IMR-90 (cell line): ENCODE measurements at regions of chr7 and their contacts with region 1.

Region 1: DNA sequence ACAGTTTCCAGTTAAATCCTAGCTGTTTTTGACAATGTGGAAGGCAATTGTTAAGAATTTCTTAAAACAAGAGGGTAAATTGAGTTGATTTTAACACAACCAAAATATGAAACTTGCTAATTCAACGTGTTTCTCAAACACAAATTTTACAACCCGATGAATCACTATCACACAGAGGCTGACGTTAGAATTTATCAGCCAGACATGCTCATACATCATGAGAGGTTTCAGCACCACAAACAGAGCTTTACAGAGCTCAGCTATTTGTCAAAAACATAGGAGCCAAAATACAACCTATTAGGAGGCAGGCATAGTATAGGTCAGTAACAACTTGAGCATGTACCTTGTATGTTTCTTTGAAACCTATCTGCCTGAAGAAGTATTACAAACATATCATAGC is 36.1 kb downstream of the LRRN3 start:
- DNase-seq: peak; percentile 31
- ATAC-seq: peak; percentile 77
- H3K4me3 ChIP-seq: no peak overlapping the region
- H3K27ac ChIP-seq: no peak overlapping the region
- H3K4me1 ChIP-seq: no peaks in the 10 kb centered on the region
- H3K27me3 ChIP-seq: no peaks in the 10 kb centered on the region
- CTCF ChIP-seq: no peak
- POLR2A ChIP-seq: no peak
- RAD21 ChIP-seq: no peak

Region 2: GRCh38 chr7:111168182-111168581 is 41.2 kb after region 1 on chr7:
- CTCF ChIA-PET with region 1: no interaction called
- POLR2A ChIA-PET with region 1: no interaction called
- dilution Hi-C with region 1: no loop called
- in situ Hi-C with region 1: no loop called
- intact Hi-C with region 1: loop called (anchors 5 kb)
- DNase-seq: peak; percentile 47
- ATAC-seq: no peak
- H3K4me3 ChIP-seq: no peak overlapping the region
- H3K27ac ChIP-seq: no peak overlapping the region
- H3K4me1 ChIP-seq: no peaks in the 10 kb centered on the region
- H3K27me3 ChIP-seq: no peaks in the 10 kb centered on the region
- CTCF ChIP-seq: no peak
- POLR2A ChIP-seq: no peak
- RAD21 ChIP-seq: no peak